Dendritic cell treated with granulocyte-macrophage colony-stimulating factor and Interleukin-4, amounts not matched to agents 40 ng/mL and 50 ng/mL, for 4 days (primary cell): ENCODE measurements at regions of chr5 and their contacts with region 1.

Region 1: DNA sequence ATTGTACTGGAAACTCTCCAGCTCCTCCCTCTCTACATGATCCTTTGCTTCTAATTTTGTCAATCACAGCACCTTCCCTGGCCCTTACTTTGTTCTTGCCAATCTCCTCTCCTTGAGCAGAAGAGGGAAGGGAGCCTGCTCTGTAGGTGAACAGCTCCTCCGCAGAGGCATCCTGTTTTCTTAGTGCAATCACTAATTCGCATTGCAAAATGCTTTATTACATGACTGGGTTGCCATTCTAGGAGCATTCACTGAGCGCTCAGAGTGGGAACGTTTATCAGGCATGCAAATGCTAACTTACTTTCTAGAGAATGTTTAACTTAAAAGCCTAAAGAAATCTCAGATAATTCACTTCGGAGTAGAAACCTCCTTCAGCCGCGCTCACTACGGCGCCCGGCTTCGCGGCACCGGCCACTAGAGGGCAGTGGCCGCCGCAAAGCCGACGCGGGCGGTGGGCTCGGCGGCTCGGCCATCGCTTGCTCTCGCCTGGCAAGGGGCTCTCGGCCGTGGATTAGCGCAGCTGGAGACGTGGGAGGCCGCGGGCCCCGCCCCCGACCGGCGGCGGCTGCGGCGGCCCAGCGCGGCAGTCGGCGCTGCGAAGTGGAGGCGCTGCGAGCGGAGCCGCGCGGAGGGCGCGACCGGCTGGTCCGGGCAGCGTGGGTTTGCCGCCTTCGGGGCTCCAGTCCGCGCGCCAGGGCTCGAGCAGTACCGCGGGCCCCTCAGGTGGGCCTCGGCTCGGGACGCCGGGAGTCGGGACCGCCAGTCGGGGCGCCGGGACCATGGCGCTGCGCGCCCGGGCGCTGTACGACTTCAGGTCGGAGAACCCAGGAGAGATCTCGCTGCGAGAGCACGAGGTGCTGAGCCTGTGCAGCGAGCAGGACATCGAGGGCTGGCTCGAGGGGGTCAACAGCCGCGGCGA is at the start of gene SNX18:
- H3K4me3 Mint-ChIP-seq: peak within 1 kb of the TSS; percentile 86
- H3K27ac Mint-ChIP-seq: peak within 1 kb of the TSS; percentile 85
- H3K4me1 Mint-ChIP-seq: peaks cover 22% of the 10 kb centered on the region
- H3K27me3 Mint-ChIP-seq: peaks cover 10% of the 10 kb centered on the region

Region 2: DNA sequence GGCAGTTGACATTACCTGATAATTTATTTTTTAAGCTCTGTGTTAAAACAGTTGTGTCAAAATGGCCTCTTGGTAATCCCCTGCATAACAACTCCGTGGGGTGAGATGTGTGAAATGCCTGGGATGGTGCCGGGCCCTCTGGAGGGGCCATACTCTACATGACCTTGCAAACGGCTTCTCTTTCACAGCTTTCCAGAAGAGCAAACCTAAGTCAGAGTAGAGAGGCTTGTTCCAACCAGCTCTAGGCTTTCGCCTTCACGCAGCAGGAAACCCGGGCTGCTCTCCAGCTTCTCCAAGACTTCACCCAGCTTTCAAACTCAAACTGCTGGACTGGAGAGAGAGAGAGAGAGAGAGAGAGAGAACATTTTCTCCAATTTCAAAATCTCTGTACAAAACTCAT is 120.2 kb after region 1 on chr5:
- intact Hi-C with region 1: loop called (anchors 5 kb)
- H3K4me3 Mint-ChIP-seq: no peak overlapping the region
- H3K27ac Mint-ChIP-seq: no peak overlapping the region
- H3K4me1 Mint-ChIP-seq: peaks cover 17% of the 10 kb centered on the region
- H3K27me3 Mint-ChIP-seq: no peaks in the 10 kb centered on the region

Region 3: DNA sequence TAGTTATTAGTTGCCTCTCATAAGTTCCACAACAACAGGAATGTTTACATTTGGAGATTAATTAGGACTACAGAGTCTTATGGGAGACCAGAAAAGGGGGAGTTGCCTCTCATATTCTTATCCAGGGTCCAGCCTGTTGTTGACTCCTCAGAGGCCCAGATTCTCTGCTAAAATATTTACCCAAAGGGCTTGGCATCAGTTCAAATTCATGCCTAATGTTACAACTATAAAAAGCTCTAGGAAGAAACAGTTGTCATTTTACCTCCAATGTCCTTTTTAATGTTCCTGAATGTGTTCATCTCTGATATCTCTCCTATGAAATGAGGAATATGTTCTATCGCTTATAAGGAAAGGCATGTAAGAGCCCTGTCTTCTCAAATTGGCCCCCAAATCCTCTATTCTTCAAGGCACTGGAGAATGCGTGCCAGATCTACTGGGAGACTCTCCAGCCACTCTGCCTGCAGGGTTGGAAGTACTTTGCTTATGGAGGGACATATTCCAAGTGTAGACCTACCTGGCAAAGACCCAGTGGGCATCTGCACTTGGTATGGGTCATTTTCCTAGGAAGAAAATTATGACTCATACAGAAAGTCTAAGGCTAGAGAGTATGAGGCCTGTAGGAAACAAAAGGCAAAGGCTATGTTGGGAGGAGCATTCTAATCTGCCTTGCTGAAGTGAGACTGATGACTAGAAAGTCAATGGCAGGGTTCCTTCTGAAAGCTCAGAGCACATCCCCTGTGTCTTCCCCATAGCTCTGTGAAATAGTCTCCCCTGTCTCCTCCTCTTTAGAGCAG is 275.4 kb after region 1 on chr5:
- intact Hi-C with region 1: loop called (anchors 5 kb)
- H3K4me3 Mint-ChIP-seq: no peak overlapping the region
- H3K27ac Mint-ChIP-seq: peak overlapping the region; percentile 34
- H3K4me1 Mint-ChIP-seq: peaks cover 33% of the 10 kb centered on the region
- H3K27me3 Mint-ChIP-seq: peaks cover 2% of the 10 kb centered on the region

Region 4: DNA sequence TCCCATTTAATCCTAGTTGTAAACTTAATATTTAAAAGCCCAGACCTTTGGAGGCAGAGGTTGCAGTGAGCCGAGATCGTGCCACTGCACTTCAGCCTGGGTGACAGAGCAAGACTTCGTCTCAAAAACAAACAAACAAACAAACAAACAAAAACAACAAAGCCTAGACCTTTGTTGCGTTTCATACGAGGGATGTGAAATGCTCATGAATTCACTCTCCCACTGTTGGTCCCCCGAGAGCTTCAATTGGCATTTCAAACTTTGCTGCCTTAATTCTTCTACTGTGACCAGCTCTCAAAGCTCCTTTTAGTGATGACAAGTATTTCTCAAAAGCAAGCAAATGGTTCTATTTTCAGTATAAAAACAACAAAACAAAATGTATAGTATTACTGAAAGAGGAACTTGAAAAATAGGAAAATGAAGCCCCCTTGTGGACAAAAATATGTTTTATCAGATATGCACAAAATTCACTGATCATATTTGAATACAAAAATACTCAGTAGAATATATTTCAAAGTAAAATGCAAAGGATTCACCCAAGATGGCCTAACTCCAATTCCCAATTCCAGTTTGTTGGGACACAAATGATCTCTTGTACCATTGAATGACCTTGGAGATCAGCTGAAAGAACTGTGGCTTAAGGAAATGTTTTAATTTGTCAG is 327.6 kb after region 1 on chr5:
- intact Hi-C with region 1: loop called (anchors 1 kb)
- H3K4me3 Mint-ChIP-seq: peak overlapping the region; percentile 34
- H3K27ac Mint-ChIP-seq: peak overlapping the region; percentile 60
- H3K4me1 Mint-ChIP-seq: peaks cover 26% of the 10 kb centered on the region
- H3K27me3 Mint-ChIP-seq: peaks cover 2% of the 10 kb centered on the region

Region 5: DNA sequence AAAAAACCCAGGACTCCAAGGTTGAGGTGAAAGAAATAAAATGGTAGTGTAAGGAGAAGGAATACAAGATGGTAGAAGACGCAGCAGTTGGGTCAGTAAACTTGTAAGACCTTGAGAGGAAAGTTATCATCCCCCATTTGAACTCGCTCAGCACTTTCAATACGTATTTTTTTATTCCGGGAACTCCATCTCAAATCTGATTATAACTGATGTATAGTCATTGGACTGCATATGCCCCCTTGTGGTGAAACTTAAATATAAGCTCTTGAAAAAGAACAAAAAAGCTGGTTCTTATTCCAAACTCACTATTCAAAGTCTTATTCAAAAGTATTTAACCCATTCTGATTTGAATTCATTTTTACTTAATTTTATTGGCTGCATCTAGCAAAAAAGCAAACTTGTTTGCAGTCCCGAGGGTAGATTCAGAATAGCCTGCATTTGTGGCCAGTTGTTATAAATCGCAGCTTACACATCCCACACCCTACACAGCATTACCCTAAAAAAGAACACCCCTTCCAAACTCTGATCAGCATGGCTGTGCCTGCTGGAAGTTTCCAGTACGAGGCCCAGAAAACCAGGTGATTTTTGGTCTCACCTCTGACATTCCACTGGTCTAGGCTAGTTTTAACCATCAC is 350.0 kb after region 1 on chr5:
- intact Hi-C with region 1: loop called (anchors 1 kb)
- H3K4me3 Mint-ChIP-seq: peak overlapping the region; percentile 36
- H3K27ac Mint-ChIP-seq: no peak overlapping the region
- H3K4me1 Mint-ChIP-seq: peaks cover 5% of the 10 kb centered on the region
- H3K27me3 Mint-ChIP-seq: peaks cover 11% of the 10 kb centered on the region

Region 6: GRCh38 chr5:55146543-55147151 is 629.2 kb after region 1 on chr5:
- intact Hi-C with region 1: loop called (anchors 5 kb)
- H3K4me3 Mint-ChIP-seq: no peak overlapping the region
- H3K27ac Mint-ChIP-seq: no peak overlapping the region
- H3K4me1 Mint-ChIP-seq: peaks cover 5% of the 10 kb centered on the region
- H3K27me3 Mint-ChIP-seq: peaks cover 18% of the 10 kb centered on the region